CD8-positive, alpha-beta memory T cell (primary cell): ENCODE measurements at regions of chr13 and their contacts with region 1.

Region 1: GRCh38 chr13:48505597-48506091 is 27.2 kb downstream of the RCBTB2 start:
- DNase-seq: peak; percentile 18 to 78 (median 73)
- H3K4me3 ChIP-seq: peak overlapping the region; percentile 46
- H3K4me3 Mint-ChIP-seq: peak overlapping the region; percentile 20 to 78 (median 74)
- H3K27ac ChIP-seq: peak overlapping the region; percentile 36
- H3K27ac Mint-ChIP-seq: peak overlapping the region; percentile 79 to 96 (median 94)
- H3K4me1 ChIP-seq: peaks cover 39% of the 10 kb centered on the region
- H3K4me1 Mint-ChIP-seq: peaks cover 47 to 73% (median 71%) of the 10 kb centered on the region in 3 donors
- H3K27me3 ChIP-seq: no peaks in the 10 kb centered on the region
- H3K27me3 Mint-ChIP-seq: peaks cover 0 to 2% of the 10 kb centered on the region in 2 donors

Region 2: GRCh38 chr13:47549219-47549752 is 956.4 kb before region 1 on chr13:
- CTCF ChIA-PET with region 1: no interaction called
- POLR2A ChIA-PET with region 1: no interaction called
- DNase-seq: no peak
- H3K4me3 ChIP-seq: no peak overlapping the region
- H3K4me3 Mint-ChIP-seq: no peak overlapping the region
- H3K27ac ChIP-seq: no peak overlapping the region
- H3K27ac Mint-ChIP-seq: no peak overlapping the region
- H3K4me1 ChIP-seq: no peaks in the 10 kb centered on the region
- H3K4me1 Mint-ChIP-seq: no peaks in the 10 kb centered on the region
- H3K27me3 ChIP-seq: no peaks in the 10 kb centered on the region
- H3K27me3 Mint-ChIP-seq: peaks cover 0 to 2% of the 10 kb centered on the region in 2 donors

Region 3: DNA sequence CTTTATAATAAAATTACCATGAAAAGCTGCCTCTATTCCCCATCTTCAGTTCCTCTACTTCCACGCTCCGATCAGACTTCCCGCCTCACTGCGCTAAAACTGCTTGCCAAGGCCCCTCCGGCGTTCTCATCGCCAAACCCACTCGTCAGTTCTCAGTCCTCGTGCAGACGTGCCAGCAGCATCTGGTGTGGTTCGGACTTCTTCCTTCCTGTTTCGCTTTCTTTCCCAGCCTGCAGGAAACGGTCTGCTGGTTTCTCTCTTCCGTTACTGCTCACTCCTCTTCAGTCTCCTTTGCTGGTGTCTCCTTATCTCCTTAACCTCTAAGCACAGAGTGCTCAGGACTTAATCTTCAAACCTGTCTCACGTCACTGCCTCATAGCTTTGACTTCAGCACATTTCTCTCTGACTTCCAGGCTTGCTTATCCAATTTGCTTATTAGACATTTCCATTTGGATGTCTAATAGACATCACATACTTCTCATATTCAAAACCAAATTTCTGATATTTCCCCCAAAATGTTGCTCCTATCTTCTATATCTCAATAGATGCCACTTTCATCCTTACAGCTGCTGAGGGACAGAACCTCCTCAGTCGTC is 13.1 kb before region 1 on chr13:
- CTCF ChIA-PET with region 1: interaction called, 7 read pairs
- POLR2A ChIA-PET with region 1: interaction called, 15 read pairs
- DNase-seq: peak; percentile 59 to 85 (median 75)
- H3K4me3 ChIP-seq: peak overlapping the region; percentile 84
- H3K4me3 Mint-ChIP-seq: no peak overlapping the region
- H3K27ac ChIP-seq: peak overlapping the region; percentile 72
- H3K27ac Mint-ChIP-seq: no peak overlapping the region
- H3K4me1 ChIP-seq: peaks cover 77% of the 10 kb centered on the region
- H3K4me1 Mint-ChIP-seq: peaks cover 3 to 30% (median 3%) of the 10 kb centered on the region in 3 donors
- H3K27me3 ChIP-seq: no peaks in the 10 kb centered on the region
- H3K27me3 Mint-ChIP-seq: no peaks in the 10 kb centered on the region

Region 4: GRCh38 chr13:48910686-48911085 is 405.0 kb after region 1 on chr13:
- CTCF ChIA-PET with region 1: no interaction called
- POLR2A ChIA-PET with region 1: no interaction called
- DNase-seq: no peak
- H3K4me3 ChIP-seq: no peak overlapping the region
- H3K4me3 Mint-ChIP-seq: no peak overlapping the region
- H3K27ac ChIP-seq: no peak overlapping the region
- H3K27ac Mint-ChIP-seq: no peak overlapping the region
- H3K4me1 ChIP-seq: no peaks in the 10 kb centered on the region
- H3K4me1 Mint-ChIP-seq: no peaks in the 10 kb centered on the region
- H3K27me3 ChIP-seq: no peaks in the 10 kb centered on the region
- H3K27me3 Mint-ChIP-seq: peaks cover 7 to 28% of the 10 kb centered on the region in 2 donors